ENCODE measurements at regions of chr18 and their contacts with region 1.

Region 1: DNA sequence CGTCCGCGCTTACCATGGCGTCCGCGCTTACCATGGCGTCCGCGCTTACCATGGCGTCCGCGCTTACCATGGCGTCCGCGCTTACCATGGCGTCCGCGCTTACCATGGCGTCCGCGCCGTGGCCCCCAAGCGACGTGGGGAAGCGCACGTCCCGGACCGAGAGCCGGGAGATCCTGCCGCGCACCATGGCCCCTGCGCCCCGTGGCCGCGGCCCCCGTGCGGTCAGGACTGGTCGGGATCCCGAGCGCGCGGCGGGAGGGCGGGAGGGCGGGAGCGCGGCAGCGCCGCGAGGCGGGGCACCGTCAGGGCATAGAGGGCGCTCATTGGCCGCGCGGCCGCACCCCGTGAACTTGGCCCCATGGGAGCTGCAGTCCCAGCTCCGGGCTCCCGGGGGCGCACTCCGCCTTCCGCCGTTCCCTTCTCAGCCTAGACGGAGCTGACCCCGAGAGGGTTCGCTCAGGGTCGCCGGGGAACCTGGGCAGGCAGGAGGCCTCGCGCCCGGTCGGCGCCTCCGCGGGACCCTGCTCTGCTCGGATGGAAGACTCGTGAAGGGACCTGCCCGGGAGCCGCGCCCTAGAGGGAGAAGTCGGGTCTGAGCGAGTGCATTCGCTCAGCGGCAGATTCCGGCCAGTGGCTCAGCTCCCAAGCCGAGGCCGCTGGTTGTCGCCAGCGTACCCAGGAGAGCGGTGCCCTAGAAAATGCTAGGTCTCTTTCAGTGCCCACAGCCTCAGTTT is at the start of gene ENOSF1:
- DNase-seq: peak; percentile 73 to 82 (median 77)
- H3K4me3 ChIP-seq: peak within 1 kb of the TSS; percentile 93
- H3K4me3 Mint-ChIP-seq: peak within 1 kb of the TSS; percentile 79 to 96 (median 92)
- H3K27ac ChIP-seq: peak within 1 kb of the TSS; percentile 73
- H3K27ac Mint-ChIP-seq: peak within 1 kb of the TSS; percentile 94 to 98 (median 97)
- H3K4me1 ChIP-seq: peaks cover 22% of the 10 kb centered on the region
- H3K4me1 Mint-ChIP-seq: peaks cover 20 to 38% (median 29%) of the 10 kb centered on the region in 4 donors
- H3K27me3 ChIP-seq: no peaks in the 10 kb centered on the region
- H3K27me3 Mint-ChIP-seq: no peaks in the 10 kb centered on the region
- total RNA-seq, gene ENOSF1: 107 to 133 TPM

Region 2: GRCh38 chr18:267688-268552 is 444.6 kb before region 1 on chr18 and contains the start of gene THOC1:
- CTCF ChIA-PET with region 1: no interaction called
- POLR2A ChIA-PET with region 1: no interaction called
- intact Hi-C with region 1: loop called (anchors 5 kb)
- DNase-seq: peak; percentile 92 to 96 (median 93)
- H3K4me3 ChIP-seq: peak within 1 kb of the TSS; percentile 92 to 99
- H3K4me3 Mint-ChIP-seq: peak within 1 kb of the TSS; percentile 95 to 100 (median 98)
- H3K27ac ChIP-seq: peak within 1 kb of the TSS; percentile 99
- H3K27ac Mint-ChIP-seq: peak within 1 kb of the TSS; percentile 99 to 100 (median 100)
- H3K4me1 ChIP-seq: peaks cover 24% of the 10 kb centered on the region
- H3K4me1 Mint-ChIP-seq: peaks cover 17 to 47% (median 30%) of the 10 kb centered on the region in 4 donors
- H3K27me3 ChIP-seq: no peaks in the 10 kb centered on the region
- H3K27me3 Mint-ChIP-seq: no peaks in the 10 kb centered on the region
- total RNA-seq, gene THOC1: 65.9 to 69.9 TPM

Region 3: GRCh38 chr18:658001-658946 is 54.3 kb before region 1 on chr18:
- CTCF ChIA-PET with region 1: no interaction called
- POLR2A ChIA-PET with region 1: interaction called, 5 read pairs
- intact Hi-C with region 1: loop called (anchors 10 kb)
- DNase-seq: peak in 3 of 5 donors; percentile 28 to 36 (median 31)
- H3K4me3 ChIP-seq: peak overlapping the region; percentile 54 to 85
- H3K4me3 Mint-ChIP-seq: peak overlapping the region; percentile 84 to 92 (median 89)
- H3K27ac ChIP-seq: peak overlapping the region; percentile 13
- H3K27ac Mint-ChIP-seq: peak overlapping the region in 2 of 7 donors; percentile 77 to 81
- H3K4me1 ChIP-seq: no peaks in the 10 kb centered on the region
- H3K4me1 Mint-ChIP-seq: peaks cover 8 to 17% (median 13%) of the 10 kb centered on the region in 4 donors
- H3K27me3 ChIP-seq: no peaks in the 10 kb centered on the region
- H3K27me3 Mint-ChIP-seq: peaks cover 6 to 30% of the 10 kb centered on the region in 2 donors

Region 4: GRCh38 chr18:785242-785641 is 72.7 kb after region 1 on chr18:
- CTCF ChIA-PET with region 1: no interaction called
- POLR2A ChIA-PET with region 1: no interaction called
- intact Hi-C with region 1: no loop called
- DNase-seq: no peak
- H3K4me3 ChIP-seq: no peak overlapping the region
- H3K4me3 Mint-ChIP-seq: no peak overlapping the region
- H3K27ac ChIP-seq: no peak overlapping the region
- H3K27ac Mint-ChIP-seq: peak overlapping the region in 1 of 7 donors; percentile 3
- H3K4me1 ChIP-seq: peaks cover 15% of the 10 kb centered on the region
- H3K4me1 Mint-ChIP-seq: peaks cover 11 to 30% (median 21%) of the 10 kb centered on the region in 4 donors
- H3K27me3 ChIP-seq: no peaks in the 10 kb centered on the region
- H3K27me3 Mint-ChIP-seq: no peaks in the 10 kb centered on the region

Region 5: GRCh38 chr18:830315-830901 is 117.8 kb after region 1 on chr18:
- CTCF ChIA-PET with region 1: interaction called, 10 read pairs
- POLR2A ChIA-PET with region 1: interaction called, 3 read pairs
- intact Hi-C with region 1: loop called (anchors 1 kb)
- DNase-seq: peak; percentile 63 to 71 (median 68)
- H3K4me3 ChIP-seq: no peak overlapping the region
- H3K4me3 Mint-ChIP-seq: peak overlapping the region; percentile 4 to 82 (median 53)
- H3K27ac ChIP-seq: peak overlapping the region; percentile 17
- H3K27ac Mint-ChIP-seq: peak overlapping the region; percentile 16 to 91 (median 82)
- H3K4me1 ChIP-seq: peaks cover 16% of the 10 kb centered on the region
- H3K4me1 Mint-ChIP-seq: peaks cover 12 to 28% (median 19%) of the 10 kb centered on the region in 4 donors
- H3K27me3 ChIP-seq: no peaks in the 10 kb centered on the region
- H3K27me3 Mint-ChIP-seq: peaks cover 0 to 3% of the 10 kb centered on the region in 2 donors

Measured in CD4-positive, alpha-beta memory T cell (primary cell).